CD8-positive, alpha-beta T cell (primary cell): ENCODE measurements at regions of chr1 and their contacts with region 1.

Region 1: GRCh38 chr1:228082135-228082891 is at the start of gene ARF1:
- DNase-seq: peak; percentile 83 to 98 (median 93)
- ATAC-seq: peak; percentile 93
- H3K4me3 ChIP-seq: peak within 1 kb of the TSS; percentile 94 to 95
- H3K4me3 Mint-ChIP-seq: peak within 1 kb of the TSS; percentile 96
- H3K27ac ChIP-seq: peak within 1 kb of the TSS; percentile 96 to 97
- H3K27ac Mint-ChIP-seq: peak within 1 kb of the TSS; percentile 97
- H3K4me1 ChIP-seq: peaks cover 50% of the 10 kb centered on the region
- H3K4me1 Mint-ChIP-seq: peaks cover 51% of the 10 kb centered on the region
- H3K27me3 ChIP-seq: no peaks in the 10 kb centered on the region
- H3K27me3 Mint-ChIP-seq: no peaks in the 10 kb centered on the region
- CTCF ChIP-seq: no peak
- total RNA-seq, gene ARF1: 375 to 381 TPM

Region 2: DNA sequence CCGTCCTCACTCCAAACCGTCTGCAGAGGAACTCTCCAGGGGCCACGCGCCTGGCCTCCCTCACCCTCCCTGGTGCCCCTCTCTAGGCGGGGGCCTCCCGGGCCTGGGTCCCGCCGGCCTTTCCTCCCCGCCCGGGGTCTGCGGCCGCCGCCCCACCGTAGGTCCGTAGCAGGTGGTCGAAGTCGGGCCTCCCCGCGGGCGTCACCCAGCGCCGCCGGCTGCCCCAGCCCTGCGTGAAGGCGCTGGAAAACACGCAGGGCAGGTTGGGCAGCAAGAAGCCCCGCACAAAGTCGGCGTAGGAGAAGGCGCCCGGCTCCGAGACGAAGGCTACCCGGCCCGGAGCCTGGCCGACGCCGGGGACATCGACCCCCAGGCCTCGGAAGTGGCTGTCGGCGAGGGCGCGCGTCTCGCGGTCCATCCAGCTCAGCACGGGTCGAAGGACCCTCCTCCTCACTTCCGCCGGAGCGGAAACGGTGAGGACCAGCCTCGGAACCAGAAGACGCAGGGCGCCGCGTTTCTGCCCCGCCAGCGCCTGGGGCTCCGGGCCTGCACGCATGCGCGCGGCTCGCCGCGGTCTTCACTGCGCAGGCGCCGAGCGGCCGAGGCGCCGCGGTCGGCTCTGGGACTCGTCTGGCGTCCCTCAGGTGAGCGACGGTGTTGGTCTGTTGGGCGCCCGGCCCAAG is 347.3 kb before region 1 on chr1 and contains the starts of genes JMJD4 and SNAP47:
- CTCF ChIA-PET with region 1: no interaction called
- POLR2A ChIA-PET with region 1: no interaction called
- intact Hi-C with region 1: loop called (anchors 1 to 10 kb)
- DNase-seq: peak; percentile 82 to 97 (median 92)
- ATAC-seq: peak; percentile 89
- H3K4me3 ChIP-seq: peak within 1 kb of the TSS; percentile 71 to 95
- H3K4me3 Mint-ChIP-seq: peak within 1 kb of the TSS; percentile 89
- H3K27ac ChIP-seq: peak within 1 kb of the TSS; percentile 71 to 76
- H3K27ac Mint-ChIP-seq: peak within 1 kb of the TSS; percentile 88
- H3K4me1 ChIP-seq: peaks cover 19% of the 10 kb centered on the region
- H3K4me1 Mint-ChIP-seq: peaks cover 51% of the 10 kb centered on the region
- H3K27me3 ChIP-seq: no peaks in the 10 kb centered on the region
- H3K27me3 Mint-ChIP-seq: no peaks in the 10 kb centered on the region
- CTCF ChIP-seq: no peak
- total RNA-seq, gene JMJD4: 7.4 to 9.5 TPM
- total RNA-seq, gene SNAP47: 11.0 to 13.8 TPM

Region 3: GRCh38 chr1:227849251-227849650 is 233.1 kb before region 1 on chr1:
- CTCF ChIA-PET with region 1: no interaction called
- POLR2A ChIA-PET with region 1: no interaction called
- intact Hi-C with region 1: no loop called
- DNase-seq: no peak
- ATAC-seq: no peak
- H3K4me3 ChIP-seq: no peak overlapping the region
- H3K4me3 Mint-ChIP-seq: no peak overlapping the region
- H3K27ac ChIP-seq: no peak overlapping the region
- H3K27ac Mint-ChIP-seq: no peak overlapping the region
- H3K4me1 ChIP-seq: no peaks in the 10 kb centered on the region
- H3K4me1 Mint-ChIP-seq: peaks cover 3% of the 10 kb centered on the region
- H3K27me3 ChIP-seq: no peaks in the 10 kb centered on the region
- H3K27me3 Mint-ChIP-seq: peaks cover 3% of the 10 kb centered on the region
- CTCF ChIP-seq: no peak

Region 4: GRCh38 chr1:228004331-228004855 is 77.9 kb before region 1 on chr1:
- CTCF ChIA-PET with region 1: interaction called, 3 read pairs
- POLR2A ChIA-PET with region 1: no interaction called
- intact Hi-C with region 1: loop called in 1 of 2 experiments (anchors 2 kb)
- DNase-seq: peak in 5 of 9 experiments; percentile 10 to 49 (median 29)
- ATAC-seq: peak; percentile 35
- H3K4me3 ChIP-seq: no peak overlapping the region
- H3K4me3 Mint-ChIP-seq: no peak overlapping the region
- H3K27ac ChIP-seq: no peak overlapping the region
- H3K27ac Mint-ChIP-seq: no peak overlapping the region
- H3K4me1 ChIP-seq: peaks cover 8% of the 10 kb centered on the region
- H3K4me1 Mint-ChIP-seq: peaks cover 9% of the 10 kb centered on the region
- H3K27me3 ChIP-seq: peaks cover 13 to 14% of the 10 kb centered on the region in 2 experiments
- H3K27me3 Mint-ChIP-seq: peaks cover 46% of the 10 kb centered on the region
- CTCF ChIP-seq: no peak

Region 5: DNA sequence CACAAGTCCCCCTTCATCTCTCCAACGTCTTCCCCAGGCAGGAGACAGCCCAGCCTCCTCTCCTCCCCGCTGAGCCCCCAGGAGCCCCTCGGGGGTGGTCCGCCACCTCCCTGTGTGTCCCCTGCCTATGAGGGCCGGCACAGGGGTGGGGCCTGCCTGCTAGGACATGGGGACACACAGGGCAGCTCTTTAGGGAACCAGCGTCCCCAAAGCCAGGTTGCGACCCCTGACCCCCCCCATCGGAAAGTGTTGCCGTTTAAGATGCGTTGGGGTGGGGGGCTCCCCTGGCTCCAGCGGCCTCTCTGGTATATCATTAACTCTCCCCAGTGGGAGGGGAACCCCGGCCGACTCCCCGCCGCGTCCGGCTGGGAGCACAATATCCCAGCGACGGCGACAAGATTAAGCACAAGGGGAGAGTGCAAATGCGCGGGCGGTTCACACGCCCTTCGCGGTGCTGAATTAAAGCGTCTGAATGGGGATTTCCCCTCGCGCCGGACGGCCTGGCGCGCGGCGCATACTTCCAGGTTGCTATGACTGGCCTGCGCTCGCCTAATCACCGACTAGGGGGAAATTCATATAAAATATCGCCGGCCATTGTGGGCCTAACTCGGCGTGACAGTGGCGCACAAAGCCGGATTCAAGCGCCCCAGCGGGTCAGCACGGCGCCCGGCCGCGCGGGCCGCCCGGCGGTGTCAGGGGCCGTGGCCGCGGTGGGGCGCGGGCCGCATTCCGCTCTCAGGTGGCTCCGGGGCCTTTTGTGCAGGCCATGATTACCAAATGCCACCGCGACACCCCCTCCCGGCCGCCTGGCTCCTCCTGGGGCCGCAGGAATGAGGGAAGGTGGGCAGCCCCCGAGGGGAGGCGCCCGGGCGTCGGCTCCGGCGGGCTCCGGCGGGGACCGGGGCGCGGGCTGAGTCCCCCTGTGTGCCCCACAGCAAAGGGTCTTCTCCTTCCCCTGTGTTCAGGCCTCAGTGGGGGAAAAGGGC is 44.6 kb before region 1 on chr1:
- CTCF ChIA-PET with region 1: no interaction called
- POLR2A ChIA-PET with region 1: no interaction called
- intact Hi-C with region 1: no loop called
- DNase-seq: peak in 4 of 9 experiments; percentile 8 to 46 (median 35)
- ATAC-seq: peak; percentile 34
- H3K4me3 ChIP-seq: peak overlapping the region in 1 of 2 experiments; percentile 30
- H3K4me3 Mint-ChIP-seq: peak overlapping the region; percentile 23
- H3K27ac ChIP-seq: no peak overlapping the region
- H3K27ac Mint-ChIP-seq: no peak overlapping the region
- H3K4me1 ChIP-seq: no peaks in the 10 kb centered on the region
- H3K4me1 Mint-ChIP-seq: peaks cover 2% of the 10 kb centered on the region
- H3K27me3 ChIP-seq: peaks cover 7 to 12% of the 10 kb centered on the region in 2 experiments
- H3K27me3 Mint-ChIP-seq: peaks cover 31% of the 10 kb centered on the region
- CTCF ChIP-seq: no peak

Region 6: DNA sequence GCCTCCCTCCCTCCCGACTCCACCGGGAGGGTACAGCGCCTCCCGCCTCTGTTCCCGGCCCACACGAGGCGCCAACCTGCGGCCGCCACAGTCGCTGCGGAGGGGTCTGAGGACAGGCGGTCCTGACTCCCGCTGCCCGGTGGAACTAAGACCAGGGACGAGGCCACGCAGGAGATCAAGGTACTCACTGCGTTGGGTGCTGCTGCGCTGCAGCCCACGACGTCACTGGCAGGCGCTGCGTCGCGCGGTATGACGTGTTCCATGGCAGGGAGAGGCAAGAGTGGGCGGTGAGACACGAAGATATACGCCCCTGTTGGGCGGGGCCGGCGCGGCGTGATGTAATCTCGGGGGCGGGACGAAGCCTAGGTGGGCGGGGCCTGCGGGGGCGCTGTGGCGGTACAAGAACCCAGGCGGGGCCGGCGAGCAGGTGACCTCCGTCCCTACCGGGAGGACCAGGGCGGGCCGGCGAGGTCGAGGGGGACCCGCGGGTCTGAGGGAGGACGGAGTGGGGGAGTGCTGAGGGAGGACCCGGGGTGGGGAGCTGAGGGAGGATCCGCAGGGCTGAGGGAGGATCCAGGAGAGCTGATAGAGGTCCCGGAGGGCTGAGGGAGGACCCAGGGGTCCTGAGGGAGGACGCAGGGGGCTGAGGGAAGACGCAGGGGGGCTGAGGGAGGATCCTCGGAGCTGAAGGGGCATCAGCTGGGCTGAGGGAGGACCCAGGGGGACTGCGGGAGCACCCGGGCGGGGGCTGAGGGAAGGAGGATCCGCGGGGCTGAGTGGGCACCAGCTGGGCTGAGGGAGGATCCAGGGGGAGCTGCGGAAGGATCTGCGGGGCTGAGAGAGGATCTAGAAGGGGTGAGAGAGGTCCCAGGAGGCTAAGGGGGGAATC is 27.0 kb after region 1 on chr1 and contains the start of gene MRPL55:
- CTCF ChIA-PET with region 1: no interaction called
- POLR2A ChIA-PET with region 1: interaction called, 6 read pairs
- intact Hi-C with region 1: loop called (anchors 1 kb)
- DNase-seq: peak; percentile 97 to 100 (median 98)
- ATAC-seq: peak; percentile 97
- H3K4me3 ChIP-seq: peak within 1 kb of the TSS; percentile 93 to 98
- H3K4me3 Mint-ChIP-seq: peak within 1 kb of the TSS; percentile 95
- H3K27ac ChIP-seq: peak within 1 kb of the TSS; percentile 90 to 94
- H3K27ac Mint-ChIP-seq: peak within 1 kb of the TSS; percentile 96
- H3K4me1 ChIP-seq: peaks cover 21% of the 10 kb centered on the region
- H3K4me1 Mint-ChIP-seq: peaks cover 26% of the 10 kb centered on the region
- H3K27me3 ChIP-seq: no peaks in the 10 kb centered on the region
- H3K27me3 Mint-ChIP-seq: no peaks in the 10 kb centered on the region
- CTCF ChIP-seq: no peak
- total RNA-seq, gene MRPL55: 90.2 to 90.7 TPM

Region 7: GRCh38 chr1:228123505-228123904 is 41.2 kb after region 1 on chr1:
- CTCF ChIA-PET with region 1: no interaction called
- POLR2A ChIA-PET with region 1: no interaction called
- intact Hi-C with region 1: no loop called
- DNase-seq: no peak
- ATAC-seq: no peak
- H3K4me3 ChIP-seq: no peak overlapping the region
- H3K4me3 Mint-ChIP-seq: no peak overlapping the region
- H3K27ac ChIP-seq: no peak overlapping the region
- H3K27ac Mint-ChIP-seq: no peak overlapping the region
- H3K4me1 ChIP-seq: no peaks in the 10 kb centered on the region
- H3K4me1 Mint-ChIP-seq: peaks cover 4% of the 10 kb centered on the region
- H3K27me3 ChIP-seq: no peaks in the 10 kb centered on the region
- H3K27me3 Mint-ChIP-seq: peaks cover 5% of the 10 kb centered on the region
- CTCF ChIP-seq: no peak

Region 8: DNA sequence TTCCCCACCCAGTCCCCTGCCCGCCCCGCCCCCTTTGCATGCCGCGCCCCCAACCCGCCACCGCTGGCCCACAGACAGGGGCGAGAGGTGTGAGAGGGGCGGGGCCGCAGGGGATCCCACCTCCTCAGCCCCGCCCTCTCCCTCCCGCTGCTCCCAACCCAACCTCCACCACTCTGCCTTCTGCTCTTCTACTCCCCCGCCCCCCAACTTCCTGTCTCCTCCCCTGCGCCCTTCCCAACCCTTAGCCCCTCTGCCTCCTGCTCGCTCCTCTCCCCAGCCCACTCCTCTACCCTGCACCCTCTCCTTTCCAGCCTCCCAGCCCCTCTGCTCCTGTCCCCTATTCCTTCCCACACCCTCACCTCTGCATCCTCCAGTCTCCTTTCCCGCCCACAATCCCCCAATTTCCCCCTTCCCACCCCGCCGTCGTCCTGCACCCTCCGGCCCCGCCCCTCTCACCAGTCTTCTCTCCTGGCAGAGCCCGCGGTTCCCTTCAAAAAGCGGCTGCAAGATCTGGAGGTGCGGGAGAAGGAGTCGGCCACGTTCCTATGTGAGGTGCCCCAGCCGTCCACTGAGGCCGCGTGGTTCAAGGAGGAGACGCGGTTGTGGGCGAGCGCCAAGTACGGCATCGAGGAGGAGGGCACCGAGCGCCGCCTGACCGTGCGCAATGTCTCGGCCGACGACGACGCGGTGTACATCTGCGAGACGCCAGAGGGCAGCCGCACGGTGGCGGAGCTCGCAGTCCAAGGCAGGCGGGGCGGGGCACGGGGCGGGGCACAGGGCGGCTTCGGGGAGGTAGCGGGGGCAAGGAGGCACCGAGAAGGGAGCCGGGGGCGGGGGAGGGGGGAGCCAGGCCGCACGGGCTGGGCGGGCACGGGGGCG is 130.9 kb after region 1 on chr1:
- CTCF ChIA-PET with region 1: no interaction called
- POLR2A ChIA-PET with region 1: no interaction called
- intact Hi-C with region 1: loop called in 1 of 2 experiments (anchors 1 kb)
- DNase-seq: peak; percentile 86 to 93 (median 92)
- ATAC-seq: peak; percentile 89
- H3K4me3 ChIP-seq: peak overlapping the region; percentile 61 to 76
- H3K4me3 Mint-ChIP-seq: peak overlapping the region; percentile 90
- H3K27ac ChIP-seq: peak overlapping the region; percentile 36 to 55
- H3K27ac Mint-ChIP-seq: peak overlapping the region; percentile 93
- H3K4me1 ChIP-seq: peaks cover 13% of the 10 kb centered on the region
- H3K4me1 Mint-ChIP-seq: peaks cover 11% of the 10 kb centered on the region
- H3K27me3 ChIP-seq: peaks cover 0 to 2% of the 10 kb centered on the region in 2 experiments
- H3K27me3 Mint-ChIP-seq: no peaks in the 10 kb centered on the region
- CTCF ChIP-seq: peak; percentile 24

Region 9: DNA sequence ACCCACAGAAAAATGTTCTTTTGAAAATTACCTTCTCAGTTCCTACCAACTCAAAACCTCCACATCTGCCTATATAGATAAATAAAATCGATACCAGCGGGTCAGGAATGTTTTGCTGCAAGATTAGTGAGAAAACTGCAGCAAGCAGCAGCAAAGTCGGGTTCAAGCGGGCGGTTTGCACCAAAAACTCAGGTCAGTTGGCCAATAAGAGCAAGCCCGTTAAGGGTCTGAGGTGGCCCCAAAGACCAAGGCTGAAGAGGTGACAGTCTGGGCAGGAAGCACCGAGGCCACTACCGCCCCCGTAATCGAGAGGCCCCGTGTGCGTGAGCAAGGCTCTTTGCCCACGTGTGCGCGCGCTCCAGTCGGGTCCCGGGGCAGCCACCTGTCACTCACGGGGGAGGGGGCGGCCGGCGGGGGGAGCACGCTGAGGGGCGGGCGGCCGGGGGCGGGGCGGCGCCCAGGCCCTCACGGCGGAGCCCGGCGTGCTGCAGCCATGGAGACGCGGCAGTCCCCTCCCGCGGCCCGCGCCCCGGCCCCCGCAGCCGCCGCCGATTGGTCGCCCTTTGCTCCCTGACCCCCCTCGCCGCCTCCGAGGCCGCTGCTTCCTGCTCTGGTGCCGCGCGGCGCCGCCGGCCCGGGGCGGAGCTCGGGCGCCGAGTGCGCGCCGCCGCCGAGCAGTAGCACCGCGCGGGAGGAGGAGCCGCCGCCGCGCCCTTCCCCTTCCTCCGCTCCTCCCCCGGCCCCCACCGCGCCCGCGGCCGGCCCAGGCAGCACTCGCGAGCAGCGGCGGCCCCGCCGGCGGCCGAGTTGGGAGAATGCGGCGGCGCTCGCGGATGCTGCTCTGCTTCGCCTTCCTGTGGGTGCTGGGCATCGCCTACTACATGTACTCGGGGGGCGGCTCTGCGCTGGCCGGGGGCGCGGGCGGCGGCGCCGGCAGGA is 1984.4 kb after region 1 on chr1 and contains the start of gene GALNT2:
- CTCF ChIA-PET with region 1: no interaction called
- POLR2A ChIA-PET with region 1: no interaction called
- intact Hi-C with region 1: loop called in 1 of 2 experiments (anchors 10 kb)
- DNase-seq: peak; percentile 71 to 96 (median 86)
- ATAC-seq: peak; percentile 90
- H3K4me3 ChIP-seq: peak within 1 kb of the TSS; percentile 74 to 81
- H3K4me3 Mint-ChIP-seq: peak within 1 kb of the TSS; percentile 89
- H3K27ac ChIP-seq: peak within 1 kb of the TSS; percentile 64 to 78
- H3K27ac Mint-ChIP-seq: peak within 1 kb of the TSS; percentile 93
- H3K4me1 ChIP-seq: peaks cover 14% of the 10 kb centered on the region
- H3K4me1 Mint-ChIP-seq: peaks cover 41% of the 10 kb centered on the region
- H3K27me3 ChIP-seq: no peaks in the 10 kb centered on the region
- H3K27me3 Mint-ChIP-seq: no peaks in the 10 kb centered on the region
- CTCF ChIP-seq: no peak
- total RNA-seq, gene GALNT2: 13.6 to 15.4 TPM